Heart left ventricle (tissue), 16 donors: ENCODE measurements at regions of chr15 and their contacts with region 1.

Region 1: DNA sequence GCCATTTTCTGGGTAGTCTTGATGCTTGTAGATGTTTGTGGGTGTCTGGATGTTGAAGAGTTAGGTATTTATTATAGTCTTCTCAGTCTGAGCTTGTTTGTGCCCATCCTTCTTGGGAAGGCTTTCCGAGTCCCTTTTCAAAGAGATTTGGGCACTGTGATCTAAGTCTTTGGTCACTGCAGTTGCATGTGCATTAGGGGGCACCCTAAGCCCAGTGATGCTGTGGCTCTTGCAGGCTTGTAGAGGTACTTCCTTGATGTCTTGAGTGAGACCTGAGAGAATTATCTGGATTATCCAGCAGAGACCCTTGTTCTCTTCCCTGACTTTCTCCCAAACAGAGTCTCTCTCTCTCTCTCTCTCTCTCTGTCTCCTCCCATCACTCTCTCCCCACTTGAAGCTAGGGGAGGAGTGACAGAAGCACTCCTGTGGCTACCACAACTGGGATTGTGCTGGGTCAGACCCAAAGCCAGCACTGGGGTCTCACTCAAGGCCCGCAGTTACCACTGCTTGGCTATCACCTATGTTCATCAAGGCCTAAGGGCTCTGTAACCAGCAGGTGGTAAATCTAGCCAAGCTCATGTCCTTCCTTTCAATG is 68.5 kb downstream of the TMCO5A start:
- DNase-seq: peak; percentile 41 to 65 (median 50)
- ATAC-seq: peak in 3 of 4 donors; percentile 75 to 83 (median 77)
- H3K4me3 ChIP-seq: no peak overlapping the region
- H3K27ac ChIP-seq: no peak overlapping the region
- H3K4me1 ChIP-seq: peaks cover 0 to 34% (median 4%) of the 10 kb centered on the region in 12 donors
- H3K27me3 ChIP-seq: no peaks in the 10 kb centered on the region
- CTCF ChIP-seq: peak; percentile 36 to 71 (median 60)
- POLR2A ChIP-seq: no peak

Region 2: GRCh38 chr15:38247336-38247735 is 244.4 kb after region 1 on chr15:
- intact Hi-C with region 1: loop called in 8 of 10 experiments (anchors 5 to 10 kb)
- DNase-seq: no peak
- ATAC-seq: no peak
- H3K4me3 ChIP-seq: no peak overlapping the region
- H3K27ac ChIP-seq: peak overlapping the region in 1 of 12 donors; percentile 44
- H3K4me1 ChIP-seq: peaks cover 0 to 9% (median 5%) of the 10 kb centered on the region in 12 donors
- H3K27me3 ChIP-seq: no peaks in the 10 kb centered on the region
- CTCF ChIP-seq: no peak
- POLR2A ChIP-seq: no peak

Region 3: DNA sequence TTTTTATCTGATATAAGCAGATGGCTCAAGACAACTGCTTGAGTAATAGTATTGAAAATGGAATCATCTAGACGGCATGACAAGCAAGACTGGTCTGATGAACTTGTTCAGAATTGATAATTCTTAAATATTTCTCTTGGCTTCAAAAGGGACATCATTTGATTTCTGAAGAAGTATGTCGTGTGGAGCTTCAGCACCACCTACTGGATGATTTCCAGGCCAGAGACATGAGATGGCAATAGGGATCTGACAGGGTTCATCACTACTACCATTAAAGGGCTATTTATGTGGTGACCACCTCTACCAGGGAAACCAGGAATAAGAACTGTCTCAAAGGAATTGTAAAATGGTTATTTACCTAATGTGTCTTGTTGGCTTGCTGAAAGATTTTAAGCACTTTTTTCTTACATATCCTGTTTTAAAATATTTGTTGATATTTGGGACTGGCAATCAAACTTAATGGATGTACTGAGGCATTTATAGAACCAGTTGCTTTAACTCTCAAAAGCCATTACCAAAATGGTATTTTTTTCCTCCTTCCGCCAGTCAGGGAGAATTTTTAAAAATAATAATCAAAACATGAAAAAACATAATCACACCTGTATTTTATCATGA is 351.4 kb after region 1 on chr15:
- intact Hi-C with region 1: loop called in 6 of 10 experiments (anchors 2 to 5 kb)
- DNase-seq: peak in 4 of 5 donors; percentile 43 to 61 (median 58)
- ATAC-seq: peak; percentile 37 to 72 (median 61)
- H3K4me3 ChIP-seq: no peak overlapping the region
- H3K27ac ChIP-seq: no peak overlapping the region
- H3K4me1 ChIP-seq: peaks cover 0 to 11% (median 0%) of the 10 kb centered on the region in 12 donors
- H3K27me3 ChIP-seq: no peaks in the 10 kb centered on the region
- CTCF ChIP-seq: peak; percentile 66 to 92 (median 81)
- POLR2A ChIP-seq: no peak

Region 4: GRCh38 chr15:38389924-38390542 is 387.1 kb after region 1 on chr15:
- intact Hi-C with region 1: loop called in 6 of 10 experiments (anchors 5 to 10 kb)
- DNase-seq: peak in 4 of 5 donors; percentile 36 to 64 (median 54)
- ATAC-seq: peak in 2 of 4 donors; percentile 56 to 63
- H3K4me3 ChIP-seq: no peak overlapping the region
- H3K27ac ChIP-seq: no peak overlapping the region
- H3K4me1 ChIP-seq: no peaks in the 10 kb centered on the region
- H3K27me3 ChIP-seq: no peaks in the 10 kb centered on the region
- CTCF ChIP-seq: peak; percentile 66 to 88 (median 77)
- POLR2A ChIP-seq: no peak

Region 5: DNA sequence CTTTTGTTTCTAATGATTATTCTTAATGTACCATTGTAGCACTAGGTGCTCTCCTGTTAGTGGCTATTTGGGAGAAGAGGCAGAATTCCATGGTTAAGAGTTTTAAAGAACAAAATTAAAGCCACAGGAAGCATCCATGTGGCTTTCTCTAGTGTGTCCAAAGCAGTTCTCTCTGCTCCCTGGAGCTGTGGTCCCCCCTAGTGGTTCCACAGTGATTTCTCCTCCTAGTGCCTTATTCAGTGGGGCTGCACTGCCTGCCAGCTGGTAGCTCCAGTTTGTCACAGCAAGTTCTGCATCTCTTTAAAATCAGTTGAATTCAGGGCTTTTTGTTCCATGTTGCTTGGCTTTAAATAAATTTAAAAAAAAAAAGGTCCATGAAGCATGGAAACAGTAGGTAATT is 411.4 kb after region 1 on chr15:
- intact Hi-C with region 1: loop called in 7 of 10 experiments (anchors 5 to 10 kb)
- DNase-seq: peak; percentile 56 to 69 (median 63)
- ATAC-seq: peak in 3 of 4 donors; percentile 88 to 95 (median 88)
- H3K4me3 ChIP-seq: no peak overlapping the region
- H3K27ac ChIP-seq: no peak overlapping the region
- H3K4me1 ChIP-seq: peaks cover 0 to 20% (median 0%) of the 10 kb centered on the region in 12 donors
- H3K27me3 ChIP-seq: no peaks in the 10 kb centered on the region
- CTCF ChIP-seq: peak; percentile 52 to 74 (median 63)
- POLR2A ChIP-seq: no peak

Region 6: DNA sequence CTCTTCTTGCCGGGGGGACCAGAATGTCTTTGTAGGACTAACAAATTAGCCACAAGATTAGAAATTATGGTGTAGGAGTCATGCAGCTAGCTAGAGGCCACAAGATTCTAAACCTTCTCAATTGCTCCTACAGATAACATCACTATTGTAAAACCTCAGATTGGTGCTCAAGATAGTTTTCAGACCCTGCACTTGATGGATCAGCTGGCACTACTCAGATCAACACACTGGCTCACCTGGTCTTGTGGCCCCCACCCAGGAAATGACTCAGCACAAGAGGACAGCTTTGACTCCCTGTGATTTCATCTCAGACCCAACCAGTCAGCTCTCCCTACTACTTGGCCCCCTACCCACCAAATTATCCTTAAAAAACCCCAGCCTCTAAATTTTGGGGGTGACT is 685.8 kb after region 1 on chr15:
- intact Hi-C with region 1: loop called in 8 of 10 experiments (anchors 5 to 10 kb)
- DNase-seq: no peak
- ATAC-seq: no peak
- H3K4me3 ChIP-seq: no peak overlapping the region
- H3K27ac ChIP-seq: peak overlapping the region in 1 of 12 donors; percentile 54
- H3K4me1 ChIP-seq: peaks cover 0 to 40% (median 0%) of the 10 kb centered on the region in 12 donors
- H3K27me3 ChIP-seq: no peaks in the 10 kb centered on the region
- CTCF ChIP-seq: no peak
- POLR2A ChIP-seq: no peak